Mammary epithelial cell (primary cell): ENCODE measurements at regions of chr3 and their contacts with region 1.

Region 1: GRCh38 chr3:50112462-50112861 is 23.7 kb downstream of the RBM5 start:
- DNase-seq: peak; percentile 14
- H3K4me3 ChIP-seq: no peak overlapping the region
- H3K27ac ChIP-seq: no peak overlapping the region
- H3K4me1 ChIP-seq: no peaks in the 10 kb centered on the region
- H3K27me3 ChIP-seq: no peaks in the 10 kb centered on the region
- CTCF ChIP-seq: no peak

Region 2: DNA sequence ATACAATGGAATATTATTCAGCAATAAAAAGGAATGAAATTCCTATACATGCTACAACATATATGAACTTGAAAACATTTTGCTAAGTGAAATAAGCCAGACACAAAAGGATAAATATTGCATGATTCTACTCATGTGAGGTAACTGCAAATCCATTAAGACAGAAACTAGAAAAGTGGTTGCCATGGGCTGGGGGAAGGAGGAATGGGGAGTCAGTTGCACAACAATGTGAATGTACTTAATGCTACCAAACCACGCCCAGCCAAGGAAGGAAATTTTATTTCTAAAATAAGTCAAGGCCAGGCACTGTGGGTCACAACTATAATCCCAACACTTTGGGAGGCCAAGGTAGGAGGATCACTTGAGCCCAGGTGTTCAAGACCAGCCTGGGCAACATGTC is 378.9 kb before region 1 on chr3:
- CTCF ChIA-PET with region 1: no interaction called
- dilution Hi-C with region 1: no loop called
- in situ Hi-C with region 1: no loop called
- intact Hi-C with region 1: no loop called
- DNase-seq: no peak
- H3K4me3 ChIP-seq: no peak overlapping the region
- H3K27ac ChIP-seq: no peak overlapping the region
- H3K4me1 ChIP-seq: no peaks in the 10 kb centered on the region
- H3K27me3 ChIP-seq: no peaks in the 10 kb centered on the region
- CTCF ChIP-seq: no peak

Region 3: GRCh38 chr3:50044976-50045375 is 67.5 kb before region 1 on chr3:
- CTCF ChIA-PET with region 1: no interaction called
- dilution Hi-C with region 1: loop called (anchors 5 kb)
- in situ Hi-C with region 1: no loop called
- intact Hi-C with region 1: no loop called
- DNase-seq: no peak
- H3K4me3 ChIP-seq: no peak overlapping the region
- H3K27ac ChIP-seq: no peak overlapping the region
- H3K4me1 ChIP-seq: no peaks in the 10 kb centered on the region
- H3K27me3 ChIP-seq: no peaks in the 10 kb centered on the region
- CTCF ChIP-seq: no peak

Region 4: DNA sequence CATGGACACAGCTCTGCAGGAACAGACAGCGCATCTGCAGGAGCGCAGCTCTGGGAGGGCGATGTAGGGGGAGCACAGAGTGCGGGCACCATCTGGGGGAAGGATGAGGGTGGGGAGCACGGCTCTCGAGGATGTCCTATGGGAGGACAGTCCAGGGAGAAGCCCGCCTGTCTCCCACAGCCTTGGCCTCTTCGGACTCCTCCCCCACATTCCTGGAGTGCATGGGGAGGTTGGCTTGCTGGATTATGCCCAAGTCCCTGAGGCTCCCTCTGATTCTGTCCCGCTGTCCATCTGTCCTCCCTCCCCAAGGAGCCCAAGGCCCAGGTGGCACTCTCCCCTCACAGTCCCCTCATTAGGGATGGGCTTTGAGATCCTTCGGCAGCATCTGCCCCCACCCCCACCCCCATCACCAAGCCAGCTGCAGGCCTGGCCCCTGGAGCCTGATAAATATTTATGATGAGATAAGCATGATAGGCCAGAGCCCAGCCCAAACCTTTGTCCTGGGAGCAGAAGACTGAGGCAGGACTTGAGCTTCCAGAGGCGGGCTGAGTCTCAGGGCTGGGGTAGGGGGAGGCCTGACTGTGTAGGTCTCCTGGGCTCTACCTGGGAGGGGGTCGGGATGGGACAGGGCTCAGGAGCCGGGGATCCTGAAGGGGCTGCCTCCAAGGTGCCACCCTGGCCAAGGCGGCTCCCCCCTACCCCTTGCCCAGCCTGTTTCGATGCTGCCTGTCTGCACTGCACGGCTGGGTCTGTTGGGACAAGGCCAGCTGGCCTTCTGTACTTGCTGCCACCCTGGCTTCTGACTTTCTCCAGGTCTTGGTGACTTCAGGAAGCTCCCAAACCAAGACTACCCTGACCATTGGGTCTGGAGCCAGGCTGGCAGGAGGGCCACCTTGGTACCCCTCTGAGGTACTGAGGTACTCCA is 14.1 kb after region 1 on chr3:
- CTCF ChIA-PET with region 1: no interaction called
- dilution Hi-C with region 1: no loop called
- in situ Hi-C with region 1: no loop called
- intact Hi-C with region 1: no loop called
- DNase-seq: no peak
- H3K4me3 ChIP-seq: no peak overlapping the region
- H3K27ac ChIP-seq: no peak overlapping the region
- H3K4me1 ChIP-seq: peaks cover 13% of the 10 kb centered on the region
- H3K27me3 ChIP-seq: no peaks in the 10 kb centered on the region
- CTCF ChIP-seq: no peak

Region 5: DNA sequence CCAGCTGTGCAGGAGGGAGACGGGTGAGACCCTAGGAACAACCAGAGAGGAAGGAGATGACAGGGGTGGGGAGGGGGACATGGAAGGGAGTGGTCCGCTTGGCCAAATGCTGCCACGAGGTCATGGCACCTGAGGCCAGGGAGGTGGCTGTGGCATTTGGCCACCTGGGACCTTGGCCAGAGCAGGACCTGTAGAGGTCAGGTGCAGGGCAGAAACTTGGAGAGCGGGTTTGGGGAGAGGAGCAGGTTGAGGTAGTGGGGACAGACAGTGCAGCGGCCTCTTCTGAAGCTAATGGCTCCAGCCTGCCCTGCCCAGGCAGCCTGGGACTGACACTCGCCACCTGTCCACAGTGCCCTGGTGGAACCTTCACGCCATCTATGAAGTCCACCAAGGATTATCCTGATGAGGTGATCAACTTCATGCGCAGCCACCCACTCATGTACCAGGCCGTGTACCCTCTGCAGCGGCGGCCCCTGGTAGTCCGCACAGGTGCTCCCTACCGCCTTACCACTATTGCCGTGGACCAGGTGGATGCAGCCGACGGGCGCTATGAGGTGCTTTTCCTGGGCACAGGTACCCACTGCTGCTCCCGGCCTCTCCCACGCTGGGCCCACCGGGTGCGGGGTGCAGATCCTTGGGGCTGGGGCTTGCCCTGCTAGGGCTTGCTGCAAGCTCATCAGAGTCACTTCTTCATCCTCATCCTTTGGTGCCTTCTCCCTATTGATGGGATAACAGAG is 71.9 kb after region 1 on chr3:
- CTCF ChIA-PET with region 1: no interaction called
- dilution Hi-C with region 1: loop called (anchors 5 kb)
- in situ Hi-C with region 1: no loop called
- intact Hi-C with region 1: no loop called
- DNase-seq: no peak
- H3K4me3 ChIP-seq: no peak overlapping the region
- H3K27ac ChIP-seq: no peak overlapping the region
- H3K4me1 ChIP-seq: no peaks in the 10 kb centered on the region
- H3K27me3 ChIP-seq: no peaks in the 10 kb centered on the region
- CTCF ChIP-seq: no peak